ENCODE measurements at regions of chr10 and their contacts with region 1.

Region 1: GRCh38 chr10:132307823-132308587 is at the start of gene STK32C:
- DNase-seq: peak; percentile 50 to 93
- H3K4me3 ChIP-seq: peak within 1 kb of the TSS; percentile 70 to 97
- H3K27ac ChIP-seq: peak within 1 kb of the TSS; percentile 66 to 81
- H3K4me1 ChIP-seq: peaks cover 6 to 8% of the 10 kb centered on the region in 2 donors
- H3K27me3 ChIP-seq: no peaks in the 10 kb centered on the region
- CTCF ChIP-seq: no peak
- total RNA-seq, gene STK32C: 16.2 TPM

Region 2: GRCh38 chr10:132331526-132332432 is 23.8 kb after region 1 on chr10 and contains the start of gene LRRC27:
- intact Hi-C with region 1: loop called (anchors 1 kb)
- DNase-seq: peak; percentile 93 to 99
- H3K4me3 ChIP-seq: peak within 1 kb of the TSS; percentile 81 to 87
- H3K27ac ChIP-seq: peak within 1 kb of the TSS; percentile 67 to 76
- H3K4me1 ChIP-seq: peaks cover 4 to 20% of the 10 kb centered on the region in 2 donors
- H3K27me3 ChIP-seq: no peaks in the 10 kb centered on the region
- CTCF ChIP-seq: no peak
- total RNA-seq, gene LRRC27: 2.0 TPM

Region 3: DNA sequence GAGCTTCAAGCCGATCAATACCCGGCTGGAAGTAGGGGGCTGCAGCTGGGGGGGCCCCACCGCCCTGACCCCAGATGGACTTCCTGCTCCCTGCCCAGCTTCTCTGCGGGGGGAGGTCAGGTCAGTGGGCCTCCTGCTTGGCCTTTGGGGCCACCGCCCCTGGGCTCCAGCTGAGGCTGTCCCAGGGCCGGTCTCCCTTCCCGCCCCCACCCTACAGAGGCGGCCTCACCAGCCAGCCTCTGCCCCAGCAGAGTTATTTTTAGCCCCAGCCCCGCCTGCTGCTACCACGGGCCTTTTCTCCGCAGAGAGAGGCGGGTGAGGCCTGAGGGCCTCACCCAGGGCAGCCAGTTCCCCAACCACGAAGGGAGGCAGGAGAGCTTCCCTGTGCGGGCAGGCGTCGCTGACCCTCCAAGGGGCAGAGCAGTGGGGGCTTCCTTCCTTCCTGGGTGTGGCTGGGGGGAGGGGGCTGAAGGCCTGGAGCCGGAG is 113.4 kb after region 1 on chr10:
- intact Hi-C with region 1: loop called (anchors 2 kb)
- DNase-seq: peak; percentile 58 to 89
- H3K4me3 ChIP-seq: peak overlapping the region; percentile 18 to 56
- H3K27ac ChIP-seq: peak overlapping the region; percentile 84 to 86
- H3K4me1 ChIP-seq: peaks cover 13 to 31% of the 10 kb centered on the region in 2 donors
- H3K27me3 ChIP-seq: no peaks in the 10 kb centered on the region
- CTCF ChIP-seq: no peak

Region 4: DNA sequence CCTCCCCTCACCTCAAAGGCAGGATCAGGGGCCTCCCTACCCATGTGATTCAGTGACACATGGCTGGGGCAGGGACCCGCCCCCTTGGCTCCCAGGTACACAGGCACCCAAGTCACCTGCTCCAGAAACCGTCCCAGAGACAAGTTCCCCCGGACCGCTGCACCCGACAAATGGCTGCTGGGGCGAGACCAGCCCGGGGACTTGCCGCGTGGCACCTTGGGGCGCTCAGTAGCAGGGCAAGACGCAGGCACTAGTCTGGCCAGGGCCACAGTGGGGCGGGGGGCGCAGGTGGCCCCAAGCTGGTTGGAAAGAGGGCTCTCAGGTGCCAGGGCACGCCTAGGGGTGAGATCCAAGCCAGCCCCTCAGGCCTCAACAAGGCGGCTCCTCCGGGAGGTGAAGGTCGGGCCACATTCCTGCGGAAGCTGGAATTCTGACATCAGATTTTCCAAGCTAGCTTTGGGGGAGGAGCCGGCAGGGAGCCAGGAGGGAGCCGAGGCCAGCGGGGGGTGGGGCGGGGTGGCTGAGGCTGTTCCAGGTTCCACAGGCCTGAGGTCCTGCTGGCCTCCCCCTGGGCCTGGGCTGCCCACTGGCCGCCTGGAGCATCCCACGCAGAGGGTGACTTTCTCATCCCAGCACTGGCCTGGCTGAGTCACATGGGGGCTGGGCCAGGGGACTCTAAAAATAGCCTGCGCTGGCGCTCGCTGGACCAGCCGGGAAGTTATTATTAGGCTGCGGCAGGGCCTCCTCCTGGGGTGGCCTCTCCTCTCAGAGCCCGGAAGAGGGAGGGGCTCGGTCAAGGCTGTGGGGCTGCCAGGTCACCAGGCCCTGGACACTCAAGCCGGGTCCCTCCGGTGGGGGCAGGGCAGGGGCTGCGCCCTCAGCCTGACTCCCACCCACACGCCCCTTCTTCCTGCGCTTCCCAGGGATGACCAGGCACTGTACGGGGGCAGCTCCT is 209.0 kb after region 1 on chr10:
- intact Hi-C with region 1: loop called (anchors 1 kb)
- DNase-seq: peak; percentile 87 to 98
- H3K4me3 ChIP-seq: peak overlapping the region; percentile 37 to 45
- H3K27ac ChIP-seq: peak overlapping the region; percentile 97
- H3K4me1 ChIP-seq: peaks cover 24 to 58% of the 10 kb centered on the region in 2 donors
- H3K27me3 ChIP-seq: no peaks in the 10 kb centered on the region
- CTCF ChIP-seq: no peak

Region 5: GRCh38 chr10:133309111-133309719 is 1001.2 kb after region 1 on chr10:
- intact Hi-C with region 1: loop called (anchors 5 kb)
- DNase-seq: peak; percentile 72 to 94
- H3K4me3 ChIP-seq: peak overlapping the region; percentile 92 to 93
- H3K27ac ChIP-seq: peak overlapping the region; percentile 87 to 91
- H3K4me1 ChIP-seq: peaks cover 2 to 25% of the 10 kb centered on the region in 2 donors
- H3K27me3 ChIP-seq: no peaks in the 10 kb centered on the region
- CTCF ChIP-seq: no peak

Measured in ascending aorta (tissue), 2 donors.